GM13976 (cell line): ENCODE measurements at regions of chr9 and their contacts with region 1.

Region 1: GRCh38 chr9:87324613-87325194 is 173.0 kb upstream of the DAPK1 start:
- DNase-seq: peak; percentile 68
- CTCF ChIP-seq: peak; percentile 59

Region 2: GRCh38 chr9:86434039-86434726 is 890.5 kb before region 1 on chr9:
- in situ Hi-C with region 1: loop called (anchors 25 kb)
- DNase-seq: peak; percentile 57
- CTCF ChIP-seq: peak; percentile 58

Region 3: DNA sequence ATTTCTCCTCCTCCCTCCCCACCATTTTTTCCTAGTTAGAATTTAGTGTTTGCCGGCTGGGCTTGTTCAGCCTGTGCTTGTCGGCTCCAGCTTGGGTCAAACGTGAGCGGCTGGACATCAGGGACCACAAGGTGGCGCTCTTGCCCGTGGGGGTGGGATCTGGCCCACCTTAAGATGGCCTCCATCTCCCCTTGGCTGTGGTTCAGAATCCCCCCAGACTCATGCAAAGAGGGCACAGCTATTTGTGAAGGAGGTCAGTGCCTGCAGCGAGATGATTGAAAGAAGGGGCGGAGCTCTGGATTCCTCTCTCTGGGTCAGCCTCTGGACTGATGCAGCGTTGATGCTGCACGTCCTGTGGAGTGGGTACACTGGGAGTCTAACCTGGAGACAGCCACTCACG is 687.2 kb before region 1 on chr9:
- in situ Hi-C with region 1: loop called (anchors 25 kb)
- DNase-seq: no peak
- CTCF ChIP-seq: peak; percentile 53